ENCODE measurements at regions of chr19 and their contacts with region 1.

Region 1: DNA sequence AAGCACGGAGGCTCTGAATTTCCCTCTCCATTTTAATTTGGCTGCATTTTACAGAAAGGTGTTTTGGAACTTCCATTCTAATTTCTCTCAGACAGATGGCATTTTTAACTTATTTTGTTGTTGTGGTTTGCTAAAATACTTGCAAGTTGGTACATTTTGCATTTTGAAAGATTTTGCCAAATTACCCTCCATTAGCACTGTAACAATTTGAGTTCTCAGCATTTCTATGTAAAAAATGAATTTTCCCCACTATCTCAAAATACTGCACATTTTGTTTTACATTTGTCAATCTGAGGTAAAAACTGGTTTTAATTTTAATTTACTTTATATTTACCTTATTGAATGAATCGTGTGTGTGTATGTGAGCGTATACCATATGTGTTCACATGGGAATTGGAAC is 7.0 kb upstream of the HNRNPL start:
- DNase-seq: no peak
- H3K4me3 Mint-ChIP-seq: peak overlapping the region; percentile 24
- H3K27ac Mint-ChIP-seq: no peak overlapping the region
- H3K4me1 Mint-ChIP-seq: peaks cover 31% of the 10 kb centered on the region
- H3K27me3 Mint-ChIP-seq: no peaks in the 10 kb centered on the region

Region 2: DNA sequence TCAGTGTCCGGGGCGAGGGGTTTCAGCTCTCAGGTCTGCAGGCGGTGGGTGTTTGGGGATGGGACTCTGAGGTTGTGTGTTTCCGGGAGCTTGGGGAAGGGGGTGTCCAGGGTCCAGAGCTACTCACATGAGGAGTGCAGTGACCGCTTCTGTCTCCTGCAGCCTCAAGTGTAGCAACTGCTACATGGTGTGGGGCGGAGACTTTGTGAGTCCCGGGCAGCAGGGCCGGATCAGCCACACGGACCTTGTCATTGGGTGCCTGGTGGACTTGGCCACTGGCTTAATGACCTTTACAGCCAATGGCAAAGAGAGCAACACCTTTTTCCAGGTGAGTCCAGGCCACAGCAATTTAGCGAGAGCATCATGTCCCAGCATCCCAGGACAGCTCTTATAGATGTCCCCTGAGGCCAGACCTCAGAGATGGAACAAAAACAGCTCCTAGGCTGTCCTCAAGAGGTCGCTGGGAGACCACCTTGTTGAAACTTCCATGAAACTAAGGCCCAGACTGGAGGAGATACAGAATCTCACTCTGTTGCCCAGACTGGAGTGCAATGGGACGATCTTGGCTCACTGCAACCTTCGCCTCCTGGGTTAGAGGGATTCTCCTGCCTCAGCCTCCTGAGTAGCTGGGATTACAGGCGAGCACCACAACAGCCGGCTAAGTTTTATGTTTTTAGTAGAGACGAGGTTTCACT is 378.4 kb before region 1 on chr19:
- CTCF ChIA-PET with region 1: no interaction called
- intact Hi-C with region 1: no loop called
- DNase-seq: no peak
- H3K4me3 Mint-ChIP-seq: no peak overlapping the region
- H3K27ac Mint-ChIP-seq: no peak overlapping the region
- H3K4me1 Mint-ChIP-seq: no peaks in the 10 kb centered on the region
- H3K27me3 Mint-ChIP-seq: no peaks in the 10 kb centered on the region

Region 3: GRCh38 chr19:38492181-38492813 is 364.5 kb before region 1 on chr19:
- CTCF ChIA-PET with region 1: no interaction called
- intact Hi-C with region 1: no loop called
- DNase-seq: no peak
- H3K4me3 Mint-ChIP-seq: no peak overlapping the region
- H3K27ac Mint-ChIP-seq: no peak overlapping the region
- H3K4me1 Mint-ChIP-seq: no peaks in the 10 kb centered on the region
- H3K27me3 Mint-ChIP-seq: peaks cover 20% of the 10 kb centered on the region

Region 4: DNA sequence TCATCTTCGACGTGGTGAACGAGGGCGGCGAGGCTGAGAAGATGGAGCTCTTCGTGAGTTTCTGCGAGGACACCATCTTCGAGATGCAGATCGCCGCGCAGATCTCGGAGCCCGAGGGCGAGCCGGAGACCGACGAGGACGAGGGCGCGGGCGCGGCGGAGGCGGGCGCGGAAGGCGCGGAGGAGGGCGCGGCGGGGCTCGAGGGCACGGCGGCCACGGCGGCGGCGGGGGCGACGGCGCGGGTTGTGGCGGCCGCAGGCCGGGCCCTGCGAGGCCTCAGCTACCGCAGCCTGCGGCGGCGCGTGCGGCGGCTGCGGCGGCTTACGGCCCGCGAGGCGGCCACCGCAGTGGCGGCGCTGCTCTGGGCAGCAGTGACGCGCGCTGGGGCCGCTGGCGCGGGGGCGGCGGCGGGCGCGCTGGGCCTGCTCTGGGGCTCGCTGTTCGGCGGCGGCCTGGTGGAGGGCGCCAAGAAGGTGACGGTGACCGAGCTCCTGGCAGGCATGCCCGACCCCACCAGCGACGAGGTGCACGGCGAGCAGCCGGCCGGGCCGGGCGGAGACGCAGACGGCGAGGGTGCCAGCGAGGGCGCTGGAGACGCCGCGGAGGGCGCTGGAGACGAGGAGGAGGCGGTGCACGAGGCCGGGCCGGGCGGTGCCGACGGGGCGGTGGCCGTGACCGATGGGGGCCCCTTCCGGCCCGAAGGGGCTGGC is 291.7 kb before region 1 on chr19:
- CTCF ChIA-PET with region 1: no interaction called
- intact Hi-C with region 1: no loop called
- DNase-seq: no peak
- H3K4me3 Mint-ChIP-seq: peak overlapping the region; percentile 58
- H3K27ac Mint-ChIP-seq: no peak overlapping the region
- H3K4me1 Mint-ChIP-seq: peaks cover 6% of the 10 kb centered on the region
- H3K27me3 Mint-ChIP-seq: peaks cover 22% of the 10 kb centered on the region

Region 5: DNA sequence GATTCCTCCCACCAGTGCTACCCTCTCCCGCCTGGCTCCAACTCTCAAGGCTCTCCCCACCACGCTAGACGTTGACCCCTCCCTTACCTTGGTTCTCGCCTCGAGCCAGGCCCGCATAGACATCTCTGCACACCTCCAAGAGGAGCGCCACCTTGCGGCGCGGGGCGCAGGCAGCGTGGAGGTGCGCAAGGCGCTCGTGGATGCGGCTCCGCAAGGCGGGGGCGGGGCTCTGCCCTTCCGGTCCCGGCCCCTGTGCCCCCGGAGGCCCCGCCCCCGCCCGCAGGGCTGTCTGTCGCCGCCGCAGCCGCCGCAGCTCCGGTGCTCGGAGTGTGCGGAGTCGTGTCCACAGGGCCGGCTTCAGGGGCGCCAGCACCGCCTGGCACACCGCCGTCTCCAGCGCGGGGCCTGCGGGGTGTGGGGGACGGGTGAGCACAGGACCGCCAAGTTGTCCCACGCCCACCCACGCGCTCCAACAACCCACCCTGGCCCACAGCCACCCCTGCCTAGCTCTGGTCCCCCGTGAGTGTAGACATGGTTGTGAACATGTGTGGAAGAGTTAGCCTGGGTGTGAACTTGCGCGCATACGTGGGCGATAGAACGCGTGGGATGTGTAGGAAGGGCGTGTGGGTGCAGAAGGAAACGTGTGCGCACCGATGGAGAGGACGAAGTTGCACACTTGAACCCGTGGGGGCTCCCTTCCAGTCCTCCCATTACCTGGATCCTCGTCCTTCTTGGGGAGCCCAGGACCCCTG is 13.2 kb after region 1 on chr19:
- CTCF ChIA-PET with region 1: interaction called, 13 read pairs
- intact Hi-C with region 1: no loop called
- DNase-seq: peak; percentile 92
- H3K4me3 Mint-ChIP-seq: peak overlapping the region; percentile 89
- H3K27ac Mint-ChIP-seq: peak overlapping the region; percentile 89
- H3K4me1 Mint-ChIP-seq: peaks cover 40% of the 10 kb centered on the region
- H3K27me3 Mint-ChIP-seq: no peaks in the 10 kb centered on the region

Measured in activated naive CD4-positive, alpha-beta T cell treated with anti-CD3 and anti-CD28 coated beads for 36 hours (primary cell).